ENCODE measurements at regions of chr15 and their contacts with region 1.

Region 1: DNA sequence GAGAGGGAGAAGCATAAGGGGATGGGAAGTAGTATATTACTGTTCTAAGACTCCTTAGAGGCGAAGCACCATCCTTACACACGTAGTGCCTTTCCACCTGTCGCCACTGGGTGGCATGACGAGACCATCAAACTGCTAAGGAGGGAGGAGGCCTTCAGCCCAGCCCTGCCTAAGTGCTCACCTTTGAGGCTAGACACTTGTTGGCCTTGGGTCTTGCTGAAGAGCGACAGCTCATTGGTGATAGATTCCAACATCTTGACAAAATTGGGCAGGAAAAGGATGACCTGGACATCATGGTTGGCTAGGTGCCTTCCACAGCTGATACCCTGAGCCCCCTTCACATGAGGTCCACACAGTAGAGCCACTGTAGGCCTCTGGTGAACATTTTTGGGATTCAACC is 19.6 kb downstream of the CLK3 start:
- DNase-seq: peak; percentile 76
- H3K4me3 ChIP-seq: no peak overlapping the region
- H3K27ac ChIP-seq: no peak overlapping the region
- H3K4me1 ChIP-seq: no peaks in the 10 kb centered on the region
- H3K27me3 ChIP-seq: no peaks in the 10 kb centered on the region
- CTCF ChIP-seq: peak; percentile 82 to 89
- POLR2A ChIP-seq: no peak

Region 2: GRCh38 chr15:74653426-74654123 is 18.3 kb after region 1 on chr15:
- CTCF ChIA-PET with region 1: interaction called, 7 read pairs
- POLR2A ChIA-PET with region 1: no interaction called
- dilution Hi-C with region 1: no loop called
- intact Hi-C with region 1: loop called (anchors 1 kb)
- DNase-seq: peak; percentile 61
- H3K4me3 ChIP-seq: no peak overlapping the region
- H3K27ac ChIP-seq: peak overlapping the region; percentile 53
- H3K4me1 ChIP-seq: peaks cover 40% of the 10 kb centered on the region
- H3K27me3 ChIP-seq: no peaks in the 10 kb centered on the region
- CTCF ChIP-seq: no peak
- POLR2A ChIP-seq: no peak

Region 3: DNA sequence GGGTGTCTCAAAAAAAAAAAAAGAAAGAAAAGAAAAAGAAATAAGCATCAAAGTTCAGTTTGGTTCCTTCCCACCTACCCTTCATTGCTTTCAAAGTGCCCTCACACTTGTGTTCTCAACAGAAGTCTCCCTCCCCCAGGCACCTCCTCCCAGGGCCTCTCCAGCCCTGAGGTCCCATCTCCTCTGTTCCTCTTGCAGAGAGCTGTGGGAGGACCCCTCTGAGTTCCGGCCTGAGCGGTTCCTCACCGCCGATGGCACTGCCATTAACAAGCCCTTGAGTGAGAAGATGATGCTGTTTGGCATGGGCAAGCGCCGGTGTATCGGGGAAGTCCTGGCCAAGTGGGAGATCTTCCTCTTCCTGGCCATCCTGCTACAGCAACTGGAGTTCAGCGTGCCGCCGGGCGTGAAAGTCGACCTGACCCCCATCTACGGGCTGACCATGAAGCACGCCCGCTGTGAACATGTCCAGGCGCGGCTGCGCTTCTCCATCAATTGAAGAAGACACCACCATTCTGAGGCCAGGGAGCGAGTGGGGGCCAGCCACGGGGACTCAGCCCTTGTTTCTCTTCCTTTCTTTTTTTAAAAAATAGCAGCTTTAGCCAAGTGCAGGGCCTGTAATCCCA is 119.5 kb after region 1 on chr15:
- CTCF ChIA-PET with region 1: interaction called, 14 read pairs
- POLR2A ChIA-PET with region 1: no interaction called
- dilution Hi-C with region 1: loop called (anchors 25 kb)
- intact Hi-C with region 1: no loop called
- DNase-seq: no peak
- H3K4me3 ChIP-seq: no peak overlapping the region
- H3K27ac ChIP-seq: no peak overlapping the region
- H3K4me1 ChIP-seq: no peaks in the 10 kb centered on the region
- H3K27me3 ChIP-seq: peaks cover 0 to 1% of the 10 kb centered on the region in 2 experiments
- CTCF ChIP-seq: no peak
- POLR2A ChIP-seq: no peak

Region 4: GRCh38 chr15:74763416-74763815 is 128.2 kb after region 1 on chr15:
- CTCF ChIA-PET with region 1: interaction called, 696 read pairs
- POLR2A ChIA-PET with region 1: no interaction called
- dilution Hi-C with region 1: loop called (anchors 25 kb)
- intact Hi-C with region 1: loop called (anchors 1 kb)
- DNase-seq: no peak
- H3K4me3 ChIP-seq: no peak overlapping the region
- H3K27ac ChIP-seq: no peak overlapping the region
- H3K4me1 ChIP-seq: peaks cover 9% of the 10 kb centered on the region
- H3K27me3 ChIP-seq: no peaks in the 10 kb centered on the region
- CTCF ChIP-seq: no peak
- POLR2A ChIP-seq: no peak

Measured in endothelial cell of umbilical vein (primary cell).